Activated B cell treated with CpG ODN at 0.5 μM for 24 hours (primary cell): ENCODE measurements at regions of chr16 and their contacts with region 1.

Region 1: GRCh38 chr16:23877107-23878090 is 41.6 kb downstream of the PRKCB start:
- DNase-seq: no peak
- ATAC-seq: peak; percentile 18
- H3K4me3 Mint-ChIP-seq: peak overlapping the region; percentile 28
- H3K27ac Mint-ChIP-seq: peak overlapping the region; percentile 88
- H3K4me1 Mint-ChIP-seq: peaks cover 89% of the 10 kb centered on the region
- H3K27me3 Mint-ChIP-seq: no peaks in the 10 kb centered on the region
- CTCF ChIP-seq: no peak

Region 2: GRCh38 chr16:23362460-23363317 is 514.7 kb before region 1 on chr16:
- CTCF ChIA-PET with region 1: no interaction called
- POLR2A ChIA-PET with region 1: no interaction called
- intact Hi-C with region 1: no loop called
- DNase-seq: no peak
- ATAC-seq: no peak
- H3K4me3 Mint-ChIP-seq: no peak overlapping the region
- H3K27ac Mint-ChIP-seq: no peak overlapping the region
- H3K4me1 Mint-ChIP-seq: peaks cover 4% of the 10 kb centered on the region
- H3K27me3 Mint-ChIP-seq: no peaks in the 10 kb centered on the region
- CTCF ChIP-seq: no peak

Region 3: DNA sequence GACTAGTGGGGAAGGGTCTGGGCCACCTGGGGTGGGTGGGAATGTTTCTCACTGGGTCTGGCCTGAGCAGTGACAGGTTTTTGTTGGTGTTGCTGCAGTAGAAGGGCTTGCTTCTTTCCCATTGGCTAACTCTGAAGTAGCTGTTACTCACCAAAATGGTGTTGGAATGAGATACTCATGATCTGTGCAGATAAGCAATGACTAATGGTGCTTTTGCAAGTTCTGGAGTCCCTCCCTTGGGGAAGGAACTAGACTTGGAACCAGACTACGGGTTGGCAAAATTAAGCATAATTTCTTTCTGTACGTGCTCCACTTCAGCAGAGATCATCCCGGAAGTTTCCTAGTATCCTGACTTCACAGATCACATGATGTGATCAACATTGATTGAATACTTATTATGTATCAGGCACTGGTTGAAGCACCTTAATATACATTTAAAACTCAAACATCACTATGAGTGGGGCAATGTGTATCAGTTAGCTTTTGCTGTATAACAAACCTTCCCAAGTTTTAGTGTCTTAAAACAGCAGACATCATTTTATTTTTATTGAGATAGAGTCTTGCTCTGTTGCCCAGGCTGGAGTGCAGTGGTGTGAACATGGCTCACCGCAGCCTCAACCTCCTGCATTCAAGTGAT is 92.5 kb before region 1 on chr16:
- CTCF ChIA-PET with region 1: no interaction called
- POLR2A ChIA-PET with region 1: no interaction called
- intact Hi-C with region 1: no loop called
- DNase-seq: no peak
- ATAC-seq: no peak
- H3K4me3 Mint-ChIP-seq: no peak overlapping the region
- H3K27ac Mint-ChIP-seq: no peak overlapping the region
- H3K4me1 Mint-ChIP-seq: peaks cover 6% of the 10 kb centered on the region
- H3K27me3 Mint-ChIP-seq: peaks cover 11% of the 10 kb centered on the region
- CTCF ChIP-seq: no peak

Region 4: GRCh38 chr16:23842137-23842600 is 35.2 kb before region 1 on chr16:
- CTCF ChIA-PET with region 1: interaction called, 6 read pairs
- POLR2A ChIA-PET with region 1: interaction called, 7 read pairs
- intact Hi-C with region 1: loop called (anchors 2 kb)
- DNase-seq: no peak
- ATAC-seq: peak; percentile 14
- H3K4me3 Mint-ChIP-seq: peak overlapping the region; percentile 3
- H3K27ac Mint-ChIP-seq: peak overlapping the region; percentile 85
- H3K4me1 Mint-ChIP-seq: peaks cover 88% of the 10 kb centered on the region
- H3K27me3 Mint-ChIP-seq: no peaks in the 10 kb centered on the region
- CTCF ChIP-seq: no peak

Region 5: DNA sequence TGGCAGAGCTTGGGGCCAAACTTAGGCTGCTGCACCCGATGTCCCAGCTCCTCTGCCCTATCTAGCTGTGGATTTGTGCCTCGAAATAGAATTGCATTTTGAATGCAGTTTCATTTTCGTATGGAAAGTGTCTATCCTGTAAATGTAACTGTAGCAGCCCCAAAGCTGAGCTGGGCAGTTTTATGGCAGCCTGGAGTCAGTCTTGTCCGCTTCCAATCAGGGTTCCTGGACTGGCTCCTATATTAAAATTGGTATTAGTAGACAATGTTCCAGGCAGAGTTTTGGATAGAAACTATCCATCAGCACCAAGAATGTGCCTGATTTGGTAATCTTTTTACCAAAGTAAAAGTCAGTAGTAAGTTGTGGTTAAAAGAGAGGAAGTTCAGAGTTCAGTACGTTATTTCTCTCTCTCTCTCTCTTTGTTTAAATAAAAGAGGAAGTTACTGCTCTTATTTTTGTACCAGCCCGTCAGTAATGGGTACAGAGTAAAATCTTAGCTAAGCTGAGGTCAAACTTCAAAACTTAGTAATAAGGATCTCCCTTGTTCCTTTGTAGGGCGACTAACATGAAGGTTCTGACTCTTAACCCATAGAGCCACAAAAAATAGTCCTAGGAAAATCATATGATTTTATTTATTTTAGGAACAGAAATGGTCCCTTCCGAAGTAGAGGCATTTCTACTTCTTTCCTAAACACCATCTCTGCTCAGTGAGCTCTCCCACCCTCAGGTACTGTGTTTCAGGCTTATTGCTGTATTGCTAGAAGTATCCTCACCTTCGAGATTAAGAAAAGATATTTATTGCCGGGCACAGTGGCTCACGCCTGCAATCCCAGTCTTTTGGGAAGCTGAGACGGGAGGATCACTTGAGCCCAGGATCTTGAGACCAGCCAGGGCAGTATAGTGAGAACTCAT is 13.6 kb before region 1 on chr16:
- CTCF ChIA-PET with region 1: interaction called, 10 read pairs
- POLR2A ChIA-PET with region 1: interaction called, 9 read pairs
- intact Hi-C with region 1: loop called (anchors 1 kb)
- DNase-seq: no peak
- ATAC-seq: peak; percentile 78
- H3K4me3 Mint-ChIP-seq: peak overlapping the region; percentile 87
- H3K27ac Mint-ChIP-seq: peak overlapping the region; percentile 96
- H3K4me1 Mint-ChIP-seq: peaks cover 95% of the 10 kb centered on the region
- H3K27me3 Mint-ChIP-seq: no peaks in the 10 kb centered on the region
- CTCF ChIP-seq: no peak

Region 6: DNA sequence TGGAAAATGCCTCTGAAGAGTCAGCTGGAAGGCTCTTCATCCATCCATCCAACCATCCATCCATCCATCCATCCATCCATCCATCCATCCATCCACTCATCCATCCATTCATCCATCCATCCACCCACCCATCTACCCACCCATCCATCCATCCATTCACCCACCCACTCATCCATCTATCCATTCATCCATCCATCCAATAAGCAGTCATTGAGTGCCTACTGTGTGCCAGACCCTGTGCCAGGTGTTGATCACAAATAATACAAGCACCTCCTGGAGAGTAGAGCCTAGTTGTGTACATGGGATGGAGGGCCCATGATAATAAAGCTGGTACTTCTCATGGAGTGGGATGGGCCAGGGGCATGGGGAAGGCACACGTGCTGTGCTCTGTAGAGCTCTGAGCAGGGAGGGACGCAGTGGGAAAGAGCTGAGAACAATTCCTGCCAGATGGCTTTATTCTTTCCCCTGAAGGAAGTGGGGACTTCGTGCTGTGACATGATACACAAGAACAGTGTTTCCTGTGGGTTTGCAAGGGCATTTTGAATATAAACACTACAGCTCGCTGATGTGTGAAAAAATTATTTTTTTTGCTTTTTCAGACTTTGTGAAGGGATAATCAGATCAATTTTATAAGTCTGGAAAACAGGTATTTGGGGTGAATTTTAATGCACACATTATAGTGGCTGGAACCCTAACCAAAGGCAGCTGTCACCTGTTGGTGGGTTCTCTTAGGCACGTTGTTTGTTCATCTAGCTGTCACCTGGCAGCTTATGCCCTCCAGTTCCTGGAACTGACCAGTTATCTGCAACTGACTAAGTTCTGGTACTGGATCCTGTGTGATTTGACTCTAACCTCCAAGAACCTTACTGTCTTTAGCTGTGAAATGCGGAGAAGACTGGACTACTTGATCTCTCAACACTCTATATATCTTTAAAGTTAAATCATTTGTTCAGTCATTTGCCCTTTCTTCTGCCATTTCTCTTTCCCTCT is 19.7 kb after region 1 on chr16:
- CTCF ChIA-PET with region 1: interaction called, 5 read pairs
- POLR2A ChIA-PET with region 1: interaction called, 5 read pairs
- intact Hi-C with region 1: loop called (anchors 2 kb)
- DNase-seq: no peak
- ATAC-seq: peak; percentile 56
- H3K4me3 Mint-ChIP-seq: peak overlapping the region; percentile 50
- H3K27ac Mint-ChIP-seq: peak overlapping the region; percentile 87
- H3K4me1 Mint-ChIP-seq: peaks cover 90% of the 10 kb centered on the region
- H3K27me3 Mint-ChIP-seq: no peaks in the 10 kb centered on the region
- CTCF ChIP-seq: no peak

Region 7: DNA sequence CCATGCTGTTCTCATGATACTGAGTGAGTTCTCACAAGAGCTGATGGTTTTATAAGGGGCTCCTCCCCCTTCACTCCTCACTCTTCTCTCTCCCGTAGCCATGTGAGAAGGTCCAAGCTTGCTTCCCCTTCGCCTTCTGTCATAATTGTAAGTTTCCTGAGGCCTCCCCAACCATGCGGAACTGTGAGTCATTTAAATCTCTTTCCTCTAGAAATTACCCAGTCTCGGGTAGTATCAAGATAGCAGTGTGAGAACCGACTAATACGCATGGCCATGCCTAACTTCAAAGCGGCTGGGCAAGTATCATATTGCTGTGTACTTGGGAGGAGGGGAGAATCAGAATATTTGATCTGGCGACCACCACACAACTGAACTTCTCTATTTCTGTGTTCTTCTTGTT is 46.7 kb after region 1 on chr16:
- CTCF ChIA-PET with region 1: interaction called, 3 read pairs
- POLR2A ChIA-PET with region 1: no interaction called
- intact Hi-C with region 1: loop called (anchors 1 kb)
- DNase-seq: no peak
- ATAC-seq: peak; percentile 91
- H3K4me3 Mint-ChIP-seq: peak overlapping the region; percentile 42
- H3K27ac Mint-ChIP-seq: peak overlapping the region; percentile 94
- H3K4me1 Mint-ChIP-seq: peaks cover 82% of the 10 kb centered on the region
- H3K27me3 Mint-ChIP-seq: no peaks in the 10 kb centered on the region
- CTCF ChIP-seq: no peak

Region 8: GRCh38 chr16:23952128-23952970 is 75.0 kb after region 1 on chr16:
- CTCF ChIA-PET with region 1: interaction called, 5 read pairs
- POLR2A ChIA-PET with region 1: interaction called, 11 read pairs
- intact Hi-C with region 1: loop called (anchors 5 kb)
- DNase-seq: no peak
- ATAC-seq: peak; percentile 38
- H3K4me3 Mint-ChIP-seq: peak overlapping the region; percentile 42
- H3K27ac Mint-ChIP-seq: peak overlapping the region; percentile 91
- H3K4me1 Mint-ChIP-seq: peaks cover 96% of the 10 kb centered on the region
- H3K27me3 Mint-ChIP-seq: no peaks in the 10 kb centered on the region
- CTCF ChIP-seq: no peak

Region 9: GRCh38 chr16:24036614-24037013 is 159.2 kb after region 1 on chr16:
- CTCF ChIA-PET with region 1: interaction called, 54 read pairs
- POLR2A ChIA-PET with region 1: interaction called, 3 read pairs
- intact Hi-C with region 1: loop called (anchors 1 kb)
- DNase-seq: no peak
- ATAC-seq: peak; percentile 55
- H3K4me3 Mint-ChIP-seq: peak overlapping the region; percentile 15
- H3K27ac Mint-ChIP-seq: peak overlapping the region; percentile 70
- H3K4me1 Mint-ChIP-seq: peaks cover 48% of the 10 kb centered on the region
- H3K27me3 Mint-ChIP-seq: no peaks in the 10 kb centered on the region
- CTCF ChIP-seq: no peak